Activated B cell treated with CpG ODN at 0.5 μM for 24 hours (primary cell): ENCODE measurements at regions of chr2 and their contacts with region 1.

Region 1: GRCh38 chr2:158006961-158007719 is 94.5 kb upstream of the UPP2 start:
- DNase-seq: no peak
- ATAC-seq: no peak
- H3K4me3 Mint-ChIP-seq: no peak overlapping the region
- H3K27ac Mint-ChIP-seq: no peak overlapping the region
- H3K4me1 Mint-ChIP-seq: peaks cover 5% of the 10 kb centered on the region
- H3K27me3 Mint-ChIP-seq: peaks cover 5% of the 10 kb centered on the region
- CTCF ChIP-seq: no peak

Region 2: GRCh38 chr2:157596992-157597681 is 410.0 kb before region 1 on chr2:
- CTCF ChIA-PET with region 1: no interaction called
- POLR2A ChIA-PET with region 1: no interaction called
- intact Hi-C with region 1: loop called (anchors 5 kb)
- DNase-seq: peak; percentile 42
- ATAC-seq: peak; percentile 80
- H3K4me3 Mint-ChIP-seq: peak overlapping the region; percentile 41
- H3K27ac Mint-ChIP-seq: no peak overlapping the region
- H3K4me1 Mint-ChIP-seq: peaks cover 8% of the 10 kb centered on the region
- H3K27me3 Mint-ChIP-seq: peaks cover 3% of the 10 kb centered on the region
- CTCF ChIP-seq: no peak

Region 3: GRCh38 chr2:157777427-157777826 is 229.7 kb before region 1 on chr2:
- CTCF ChIA-PET with region 1: interaction called, 10 read pairs
- POLR2A ChIA-PET with region 1: no interaction called
- intact Hi-C with region 1: loop called (anchors 1 kb)
- DNase-seq: no peak
- ATAC-seq: no peak
- H3K4me3 Mint-ChIP-seq: no peak overlapping the region
- H3K27ac Mint-ChIP-seq: no peak overlapping the region
- H3K4me1 Mint-ChIP-seq: no peaks in the 10 kb centered on the region
- H3K27me3 Mint-ChIP-seq: no peaks in the 10 kb centered on the region
- CTCF ChIP-seq: no peak

Region 4: GRCh38 chr2:157830696-157831570 is 176.2 kb before region 1 on chr2:
- CTCF ChIA-PET with region 1: no interaction called
- POLR2A ChIA-PET with region 1: no interaction called
- intact Hi-C with region 1: no loop called
- DNase-seq: no peak
- ATAC-seq: no peak
- H3K4me3 Mint-ChIP-seq: no peak overlapping the region
- H3K27ac Mint-ChIP-seq: no peak overlapping the region
- H3K4me1 Mint-ChIP-seq: no peaks in the 10 kb centered on the region
- H3K27me3 Mint-ChIP-seq: no peaks in the 10 kb centered on the region
- CTCF ChIP-seq: no peak